Naive thymus-derived CD8-positive, alpha-beta T cell (primary cell): ENCODE measurements at regions of chr22 and their contacts with region 1.

Region 1: DNA sequence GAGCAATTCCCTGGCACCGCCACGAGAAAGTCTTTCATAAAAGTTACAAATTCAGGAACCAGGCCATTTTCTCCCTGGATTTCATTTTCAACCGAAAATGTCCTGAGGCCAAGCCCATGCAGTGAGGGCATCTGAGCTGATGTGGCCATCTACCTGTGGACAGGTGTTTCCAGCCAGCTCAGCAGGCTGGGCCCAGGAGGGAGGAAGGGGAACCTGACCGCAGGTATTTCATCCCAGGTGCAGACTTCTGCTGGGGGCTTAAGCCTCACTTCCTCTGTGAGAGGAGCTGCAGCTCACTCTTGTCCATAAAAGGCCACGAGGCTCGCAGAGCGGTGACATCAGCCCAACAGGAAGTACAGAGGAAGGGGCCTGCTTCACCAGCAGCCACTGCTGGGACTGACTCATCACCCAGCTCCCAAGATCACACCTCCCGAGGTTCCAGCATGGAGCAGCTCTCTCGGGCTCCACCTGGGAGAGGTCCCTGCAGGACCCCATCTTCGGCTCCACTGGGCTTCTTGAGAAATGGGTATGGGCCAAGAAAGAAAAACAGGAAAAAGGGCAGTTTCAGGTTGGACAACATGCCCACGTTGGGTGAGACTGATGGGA is 56.4 kb downstream of the MYH9 start:
- DNase-seq: peak; percentile 41 to 89 (median 74)
- ATAC-seq: peak; percentile 43 to 62
- H3K4me3 Mint-ChIP-seq: peak overlapping the region; percentile 80 to 96 (median 92)
- H3K27ac Mint-ChIP-seq: peak overlapping the region; percentile 96 to 99 (median 99)
- H3K4me1 Mint-ChIP-seq: peaks cover 71 to 99% (median 97%) of the 10 kb centered on the region in 4 donors
- H3K27me3 Mint-ChIP-seq: no peaks in the 10 kb centered on the region

Region 2: GRCh38 chr22:36301384-36301828 is 30.0 kb before region 1 on chr22:
- POLR2A ChIA-PET with region 1: interaction called, 13 read pairs
- DNase-seq: peak; percentile 68 to 91 (median 81)
- ATAC-seq: peak; percentile 90 to 91
- H3K4me3 Mint-ChIP-seq: peak overlapping the region in 1 of 10 donors; percentile 39
- H3K27ac Mint-ChIP-seq: peak overlapping the region; percentile 34 to 93 (median 86)
- H3K4me1 Mint-ChIP-seq: peaks cover 8 to 24% (median 11%) of the 10 kb centered on the region in 4 donors
- H3K27me3 Mint-ChIP-seq: no peaks in the 10 kb centered on the region

Region 3: DNA sequence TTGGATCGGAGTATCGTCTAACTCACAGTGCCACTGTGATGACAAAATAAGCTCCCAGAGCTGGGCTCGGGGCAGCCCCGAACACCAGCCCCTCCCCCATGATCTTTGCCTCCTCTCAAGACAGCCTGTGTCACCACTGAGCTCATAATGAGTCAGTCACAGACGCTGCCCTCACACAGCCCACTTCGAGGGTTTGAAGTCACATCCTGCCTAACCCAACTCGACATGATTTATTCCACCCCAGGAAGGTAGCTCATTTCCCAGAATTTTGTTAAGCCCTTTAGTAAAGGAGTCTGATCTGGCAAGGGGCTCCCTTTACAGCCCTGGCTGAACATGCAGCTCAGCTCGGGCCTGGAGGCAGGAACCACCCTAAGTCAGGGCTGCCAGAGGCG is 33.6 kb after region 1 on chr22:
- POLR2A ChIA-PET with region 1: interaction called, 2,215 read pairs
- DNase-seq: peak; percentile 65 to 93 (median 86)
- ATAC-seq: peak; percentile 76 to 94
- H3K4me3 Mint-ChIP-seq: peak overlapping the region; percentile 50 to 94 (median 80)
- H3K27ac Mint-ChIP-seq: peak overlapping the region; percentile 90 to 98 (median 96)
- H3K4me1 Mint-ChIP-seq: peaks cover 58 to 99% (median 97%) of the 10 kb centered on the region in 4 donors
- H3K27me3 Mint-ChIP-seq: no peaks in the 10 kb centered on the region

Region 4: GRCh38 chr22:36379593-36380361 is 48.4 kb after region 1 on chr22:
- POLR2A ChIA-PET with region 1: interaction called, 2,215 read pairs
- DNase-seq: peak in 9 of 10 donors; percentile 44 to 83 (median 58)
- ATAC-seq: peak; percentile 50
- H3K4me3 Mint-ChIP-seq: peak overlapping the region; percentile 74 to 96 (median 84)
- H3K27ac Mint-ChIP-seq: peak overlapping the region; percentile 90 to 99 (median 99)
- H3K4me1 Mint-ChIP-seq: peaks cover 29 to 96% (median 88%) of the 10 kb centered on the region in 4 donors
- H3K27me3 Mint-ChIP-seq: no peaks in the 10 kb centered on the region

Region 5: GRCh38 chr22:36409911-36410756 is 78.7 kb after region 1 on chr22:
- POLR2A ChIA-PET with region 1: interaction called, 27 read pairs
- DNase-seq: peak; percentile 43 to 90 (median 68)
- ATAC-seq: peak; percentile 72 to 76
- H3K4me3 Mint-ChIP-seq: peak overlapping the region; percentile 64 to 86 (median 80)
- H3K27ac Mint-ChIP-seq: peak overlapping the region; percentile 75 to 94 (median 87)
- H3K4me1 Mint-ChIP-seq: peaks cover 20 to 66% (median 55%) of the 10 kb centered on the region in 4 donors
- H3K27me3 Mint-ChIP-seq: no peaks in the 10 kb centered on the region

Region 6: DNA sequence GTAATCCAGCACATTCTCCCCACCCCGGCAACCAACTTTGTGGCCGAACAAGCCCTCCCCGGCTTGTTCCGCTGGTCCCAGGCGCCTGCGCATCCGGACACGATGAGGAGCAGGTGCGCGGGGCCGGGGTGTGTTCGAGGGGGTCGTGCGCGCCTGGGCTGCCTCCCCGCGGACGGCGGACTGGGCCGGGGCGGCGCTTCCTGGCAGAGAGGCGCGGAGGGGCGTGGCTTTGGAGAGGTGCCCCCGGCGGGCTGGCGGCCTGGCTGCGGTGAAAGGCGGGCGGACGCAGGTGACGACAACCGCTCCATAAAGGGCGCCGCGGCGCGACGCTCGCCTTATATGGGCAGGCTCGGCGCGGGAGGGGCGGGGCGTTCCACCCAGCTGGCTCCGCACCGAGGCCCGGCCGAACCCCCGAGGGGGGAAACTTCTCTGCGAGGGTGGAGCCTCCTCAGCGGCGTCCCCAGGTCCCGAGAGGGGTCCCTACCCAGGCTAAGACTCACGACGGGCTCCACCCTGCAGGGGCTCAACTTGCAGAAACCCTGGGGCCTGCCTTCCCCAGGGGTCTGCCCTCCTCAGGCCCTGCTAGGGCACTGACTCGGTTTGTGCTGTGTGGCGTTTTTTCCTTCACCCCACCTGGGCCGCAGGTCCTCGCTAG is 123.6 kb after region 1 on chr22:
- POLR2A ChIA-PET with region 1: interaction called, 41 read pairs
- DNase-seq: peak; percentile 89 to 95 (median 92)
- ATAC-seq: peak; percentile 71 to 74
- H3K4me3 Mint-ChIP-seq: peak overlapping the region; percentile 72 to 87 (median 79)
- H3K27ac Mint-ChIP-seq: peak overlapping the region; percentile 75 to 98 (median 94)
- H3K4me1 Mint-ChIP-seq: peaks cover 15 to 54% (median 48%) of the 10 kb centered on the region in 4 donors
- H3K27me3 Mint-ChIP-seq: no peaks in the 10 kb centered on the region